ENCODE measurements at regions of chr3 and their contacts with region 1.

Region 1: GRCh38 chr3:10945683-10946287 is 46.8 kb upstream of the SLC6A1 start:
- DNase-seq: peak; percentile 88
- H3K4me3 ChIP-seq: no peak overlapping the region
- H3K27ac ChIP-seq: no peak overlapping the region
- H3K4me1 ChIP-seq: no peaks in the 10 kb centered on the region
- H3K27me3 ChIP-seq: peaks cover 0 to 55% (median 0%) of the 10 kb centered on the region in 7 donors
- CTCF ChIP-seq: peak in 10 of 11 experiments; percentile 28 to 86 (median 72)
- POLR2A ChIP-seq: no peak

Region 2: DNA sequence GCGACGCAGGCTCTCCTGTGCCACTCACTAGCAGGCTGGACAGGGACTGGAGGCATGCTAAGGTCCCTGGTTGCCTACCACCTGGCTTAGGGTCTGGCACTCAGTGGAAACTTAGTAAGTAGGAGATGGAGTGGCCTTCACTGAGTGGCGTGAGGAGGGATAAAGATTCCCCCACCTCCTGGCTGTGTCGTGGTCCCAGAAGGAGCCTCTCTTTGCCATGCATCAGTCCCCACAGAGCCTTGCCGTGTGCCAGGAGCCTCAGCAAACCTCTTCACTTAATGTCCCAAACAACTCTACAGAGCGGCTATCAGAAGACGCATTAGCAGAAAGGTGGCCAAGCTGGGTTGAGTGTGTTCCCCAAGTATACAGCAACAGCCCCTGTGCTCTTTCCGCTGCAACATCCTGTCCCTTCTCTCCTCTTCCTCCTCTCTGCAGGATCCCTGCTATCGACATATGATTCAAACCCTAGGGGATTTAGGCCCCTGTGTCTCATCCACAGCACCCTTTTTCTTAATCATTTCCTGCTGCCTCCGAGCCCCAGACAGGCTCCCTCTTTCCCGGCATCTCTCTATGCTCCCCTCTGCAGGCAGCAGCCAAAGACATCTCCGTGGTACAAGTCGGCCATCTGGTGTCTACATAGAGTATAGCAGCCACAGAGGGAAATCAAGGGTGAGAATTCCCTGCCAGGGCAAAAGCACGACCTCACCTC is 113.5 kb after region 1 on chr3:
- intact Hi-C with region 1: loop called (anchors 5 kb)
- DNase-seq: no peak
- H3K4me3 ChIP-seq: no peak overlapping the region
- H3K27ac ChIP-seq: no peak overlapping the region
- H3K4me1 ChIP-seq: peaks cover 0 to 15% (median 10%) of the 10 kb centered on the region in 6 donors
- H3K27me3 ChIP-seq: peaks cover 0 to 57% (median 9%) of the 10 kb centered on the region in 7 donors
- CTCF ChIP-seq: peak; percentile 31 to 75 (median 67)
- POLR2A ChIP-seq: no peak

Region 3: DNA sequence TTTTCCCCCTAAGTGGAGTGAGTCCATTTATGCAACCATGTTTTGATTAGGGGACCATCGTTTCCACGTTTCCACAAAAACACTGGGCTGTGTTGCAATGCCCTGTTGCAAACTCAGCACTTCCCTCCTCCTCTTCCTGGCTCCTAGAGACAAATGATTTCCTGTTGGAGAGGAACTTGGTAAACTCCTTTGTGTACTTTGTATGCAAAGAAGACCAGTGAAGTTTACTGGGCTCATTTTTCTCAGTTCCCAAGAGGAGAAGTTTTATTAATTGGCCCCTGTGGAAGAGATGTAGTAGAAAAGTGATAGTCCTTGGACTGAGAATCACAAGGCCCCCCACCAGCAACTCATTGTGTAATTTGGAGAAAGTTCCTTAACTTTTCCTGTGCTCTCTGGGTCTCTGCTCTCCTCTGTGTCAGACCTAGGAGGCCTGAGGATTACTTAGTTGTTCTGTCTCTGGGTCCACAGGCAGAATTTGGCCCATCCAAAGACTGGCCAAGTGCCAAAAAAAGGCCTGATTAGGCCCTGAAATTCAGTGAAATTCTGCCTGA is 421.4 kb after region 1 on chr3:
- intact Hi-C with region 1: no loop called
- DNase-seq: no peak
- H3K4me3 ChIP-seq: no peak overlapping the region
- H3K27ac ChIP-seq: peak overlapping the region; percentile 55 to 89 (median 72)
- H3K4me1 ChIP-seq: peaks cover 9 to 38% (median 14%) of the 10 kb centered on the region in 6 donors
- H3K27me3 ChIP-seq: no peaks in the 10 kb centered on the region
- CTCF ChIP-seq: no peak
- POLR2A ChIP-seq: no peak

Measured in spleen (tissue), 13 donors.